ENCODE measurements at regions of chr2 and their contacts with region 1.

Region 1: GRCh38 chr2:208033758-208034502 is 8.6 kb upstream of the PLEKHM3 start:
- DNase-seq: peak; percentile 97
- ATAC-seq: peak; percentile 90
- H3K4me3 ChIP-seq: peak overlapping the region; percentile 4 to 16 (median 14); a peak in 2 of 6 replicates
- H3K27ac ChIP-seq: peak overlapping the region; percentile 70
- H3K4me1 ChIP-seq: peaks cover 70% of the 10 kb centered on the region
- H3K27me3 ChIP-seq: no peaks in the 10 kb centered on the region
- CTCF ChIP-seq: peak; percentile 98
- EP300 ChIP-seq: peak; percentile 53 to 55; a peak in 3 of 4 replicates
- POLR2A ChIP-seq: no peak
- RAD21 ChIP-seq: peak; percentile 91

Region 2: DNA sequence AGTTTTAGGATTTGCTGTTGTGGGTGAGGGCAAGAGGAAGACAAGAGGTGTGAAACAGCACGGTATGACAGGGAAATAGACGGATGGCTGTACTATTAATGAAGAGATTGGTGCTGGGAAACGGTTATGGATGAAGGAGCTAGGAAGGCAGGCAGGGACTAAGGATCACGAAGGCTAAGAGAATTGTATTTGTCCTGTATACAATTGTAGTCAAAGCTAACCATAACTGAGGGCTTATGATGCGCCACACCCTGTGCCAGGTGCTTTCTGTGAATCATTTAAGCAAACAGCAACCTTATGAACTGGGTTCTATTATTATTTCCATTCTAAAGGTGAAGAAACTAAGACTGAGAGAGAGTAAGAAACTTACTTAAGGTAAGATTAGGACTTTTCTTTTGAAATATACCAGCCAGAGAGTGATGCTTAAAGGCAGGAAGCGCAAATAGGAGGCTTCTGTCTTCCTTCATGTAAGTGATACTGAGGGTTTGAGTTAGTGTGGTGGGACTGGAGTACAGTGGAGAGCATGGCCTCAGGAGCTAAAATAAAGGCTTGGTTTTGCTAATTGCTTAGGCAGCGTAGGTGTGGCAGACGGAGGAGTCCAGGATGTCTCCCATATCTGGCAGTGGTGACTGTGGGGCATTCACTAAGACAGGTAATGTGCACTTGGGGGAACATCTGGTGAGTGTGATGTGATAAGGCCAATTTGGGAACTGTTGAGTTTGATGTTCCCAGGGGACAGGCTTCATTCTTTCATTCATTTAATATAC is 94.4 kb before region 1 on chr2:
- CTCF ChIA-PET with region 1: no interaction called
- POLR2A ChIA-PET with region 1: interaction called, 11 read pairs
- in situ Hi-C with region 1: no loop called
- intact Hi-C with region 1: loop called (anchors 2 kb)
- DNase-seq: no peak
- ATAC-seq: no peak
- H3K4me3 ChIP-seq: no peak overlapping the region
- H3K27ac ChIP-seq: no peak overlapping the region
- H3K4me1 ChIP-seq: peaks cover 54% of the 10 kb centered on the region
- H3K27me3 ChIP-seq: no peaks in the 10 kb centered on the region
- CTCF ChIP-seq: no peak
- EP300 ChIP-seq: no peak
- POLR2A ChIP-seq: no peak
- RAD21 ChIP-seq: no peak

Region 3: GRCh38 chr2:207974216-207974605 is 59.7 kb before region 1 on chr2:
- CTCF ChIA-PET with region 1: interaction called, 4 read pairs
- POLR2A ChIA-PET with region 1: no interaction called
- in situ Hi-C with region 1: no loop called
- intact Hi-C with region 1: loop called (anchors 1 kb)
- DNase-seq: no peak
- ATAC-seq: no peak
- H3K4me3 ChIP-seq: no peak overlapping the region
- H3K27ac ChIP-seq: no peak overlapping the region
- H3K4me1 ChIP-seq: peaks cover 28% of the 10 kb centered on the region
- H3K27me3 ChIP-seq: no peaks in the 10 kb centered on the region
- CTCF ChIP-seq: no peak
- EP300 ChIP-seq: no peak
- POLR2A ChIP-seq: no peak
- RAD21 ChIP-seq: no peak

Region 4: GRCh38 chr2:208072250-208072892 is 38.4 kb after region 1 on chr2:
- CTCF ChIA-PET with region 1: no interaction called
- POLR2A ChIA-PET with region 1: no interaction called
- in situ Hi-C with region 1: no loop called
- intact Hi-C with region 1: loop called (anchors 1 kb)
- DNase-seq: peak; percentile 63
- ATAC-seq: peak; percentile 93
- H3K4me3 ChIP-seq: no peak overlapping the region
- H3K27ac ChIP-seq: no peak overlapping the region
- H3K4me1 ChIP-seq: no peaks in the 10 kb centered on the region
- H3K27me3 ChIP-seq: peaks cover 0 to 22% of the 10 kb centered on the region in 2 experiments; a peak in 3 of 5 replicates
- CTCF ChIP-seq: peak; percentile 94
- EP300 ChIP-seq: no peak
- POLR2A ChIP-seq: no peak
- RAD21 ChIP-seq: peak; percentile 88

Measured in HepG2 (cell line).